CD8-positive, alpha-beta T cell (primary cell): ENCODE measurements at regions of chr15 and their contacts with region 1.

Region 1: GRCh38 chr15:80970018-80970658 is 19.5 kb downstream of the MESD start:
- DNase-seq: peak; percentile 22 to 75 (median 61)
- ATAC-seq: peak; percentile 69
- H3K4me3 ChIP-seq: no peak overlapping the region
- H3K4me3 Mint-ChIP-seq: no peak overlapping the region
- H3K27ac ChIP-seq: no peak overlapping the region
- H3K27ac Mint-ChIP-seq: no peak overlapping the region
- H3K4me1 ChIP-seq: no peaks in the 10 kb centered on the region
- H3K4me1 Mint-ChIP-seq: peaks cover 8% of the 10 kb centered on the region
- H3K27me3 ChIP-seq: no peaks in the 10 kb centered on the region
- H3K27me3 Mint-ChIP-seq: no peaks in the 10 kb centered on the region
- CTCF ChIP-seq: peak; percentile 92

Region 2: DNA sequence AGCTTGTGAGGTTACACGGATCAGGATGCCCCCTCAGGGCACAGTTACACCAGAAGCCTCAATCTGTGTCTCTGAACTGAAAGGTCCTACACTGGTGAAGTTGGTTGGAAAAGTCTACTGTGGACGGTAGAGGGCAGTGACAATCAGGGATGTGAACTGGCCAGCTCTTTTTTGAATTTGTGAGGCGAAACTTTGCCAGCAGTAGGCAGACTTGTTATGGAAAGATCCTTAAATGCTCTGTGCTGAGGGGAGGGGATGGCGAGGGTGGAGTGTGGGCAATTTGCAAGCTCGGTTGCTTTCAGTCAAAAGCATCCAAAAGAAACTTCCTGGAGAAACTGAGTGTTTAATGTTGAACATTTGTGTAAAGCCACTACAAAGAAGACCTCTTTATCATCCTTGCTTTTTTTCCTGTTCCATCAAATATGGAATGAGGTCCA is 402.4 kb before region 1 on chr15:
- CTCF ChIA-PET with region 1: interaction called, 7 read pairs
- POLR2A ChIA-PET with region 1: no interaction called
- intact Hi-C with region 1: loop called (anchors 5 kb)
- DNase-seq: peak in 3 of 9 experiments; percentile 16 to 50 (median 35)
- ATAC-seq: no peak
- H3K4me3 ChIP-seq: no peak overlapping the region
- H3K4me3 Mint-ChIP-seq: no peak overlapping the region
- H3K27ac ChIP-seq: no peak overlapping the region
- H3K27ac Mint-ChIP-seq: no peak overlapping the region
- H3K4me1 ChIP-seq: no peaks in the 10 kb centered on the region
- H3K4me1 Mint-ChIP-seq: no peaks in the 10 kb centered on the region
- H3K27me3 ChIP-seq: no peaks in the 10 kb centered on the region
- H3K27me3 Mint-ChIP-seq: peaks cover 12% of the 10 kb centered on the region
- CTCF ChIP-seq: peak; percentile 14

Region 3: DNA sequence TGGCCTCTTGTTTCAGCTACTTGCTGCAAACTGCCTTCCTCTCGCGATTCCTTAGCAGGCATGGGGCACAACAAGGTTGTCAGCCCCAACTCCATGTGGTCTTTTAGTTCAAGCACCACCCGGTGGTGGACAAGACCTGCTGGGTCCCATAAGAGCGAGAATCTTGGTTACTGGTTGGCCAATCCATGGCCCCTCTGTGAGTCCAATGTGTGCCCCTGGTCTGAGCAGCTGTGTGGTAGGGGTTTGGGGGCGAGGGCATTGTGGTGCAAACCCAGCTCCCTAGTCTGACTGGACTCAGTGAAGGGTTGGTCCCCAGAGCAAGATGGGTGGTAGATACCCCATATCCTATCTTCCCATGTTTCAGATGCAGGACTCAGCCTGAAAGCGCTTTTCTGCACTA is 29.3 kb before region 1 on chr15:
- CTCF ChIA-PET with region 1: interaction called, 10 read pairs
- POLR2A ChIA-PET with region 1: no interaction called
- intact Hi-C with region 1: no loop called
- DNase-seq: no peak
- ATAC-seq: no peak
- H3K4me3 ChIP-seq: no peak overlapping the region
- H3K4me3 Mint-ChIP-seq: no peak overlapping the region
- H3K27ac ChIP-seq: no peak overlapping the region
- H3K27ac Mint-ChIP-seq: no peak overlapping the region
- H3K4me1 ChIP-seq: no peaks in the 10 kb centered on the region
- H3K4me1 Mint-ChIP-seq: no peaks in the 10 kb centered on the region
- H3K27me3 ChIP-seq: no peaks in the 10 kb centered on the region
- H3K27me3 Mint-ChIP-seq: no peaks in the 10 kb centered on the region
- CTCF ChIP-seq: no peak

Region 4: DNA sequence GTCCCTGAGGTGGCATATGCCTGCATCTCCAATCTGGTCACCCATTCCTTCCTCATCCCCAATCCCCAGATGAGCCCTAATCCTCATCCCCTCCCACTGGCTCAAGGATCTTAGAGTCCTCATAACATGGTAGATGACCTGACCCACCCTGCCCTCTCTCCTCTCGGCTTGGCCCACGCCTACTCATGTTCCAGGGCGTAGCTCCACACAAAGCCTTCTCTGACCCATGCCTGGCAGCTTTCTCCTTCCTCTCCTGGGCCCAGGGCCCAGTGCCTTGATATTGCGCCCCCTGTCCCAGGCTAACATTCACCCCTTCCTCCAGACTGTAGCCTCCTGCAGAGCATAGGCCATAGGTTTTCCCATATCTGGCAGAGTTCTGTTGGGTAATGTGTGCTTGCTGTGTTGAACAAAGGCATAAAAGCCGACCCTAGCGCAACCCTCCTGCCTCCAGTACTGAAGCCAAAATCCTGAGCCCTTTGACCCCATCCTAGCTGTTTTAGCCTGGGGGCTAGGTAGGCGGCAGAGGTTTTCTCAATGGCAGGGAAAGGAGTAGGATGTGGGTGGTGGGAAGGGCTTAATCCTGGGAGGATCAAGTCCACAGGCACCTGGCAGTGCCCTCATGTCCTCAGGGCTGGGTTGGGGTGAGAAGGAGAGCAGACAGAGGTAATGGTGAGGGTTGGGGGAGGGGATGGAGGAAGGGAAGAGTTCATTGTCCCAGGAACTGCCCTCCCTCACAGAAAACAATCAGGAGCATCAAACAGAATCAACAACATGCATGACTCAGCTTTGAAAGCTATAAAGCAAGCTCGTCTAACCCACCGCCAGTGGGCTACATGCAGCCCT is 16.0 kb before region 1 on chr15:
- CTCF ChIA-PET with region 1: interaction called, 16 read pairs
- POLR2A ChIA-PET with region 1: no interaction called
- intact Hi-C with region 1: no loop called
- DNase-seq: peak in 1 of 9 experiments; percentile 32
- ATAC-seq: no peak
- H3K4me3 ChIP-seq: no peak overlapping the region
- H3K4me3 Mint-ChIP-seq: no peak overlapping the region
- H3K27ac ChIP-seq: no peak overlapping the region
- H3K27ac Mint-ChIP-seq: no peak overlapping the region
- H3K4me1 ChIP-seq: no peaks in the 10 kb centered on the region
- H3K4me1 Mint-ChIP-seq: peaks cover 2% of the 10 kb centered on the region
- H3K27me3 ChIP-seq: no peaks in the 10 kb centered on the region
- H3K27me3 Mint-ChIP-seq: no peaks in the 10 kb centered on the region
- CTCF ChIP-seq: no peak

Region 5: GRCh38 chr15:81239190-81239589 is 269.1 kb after region 1 on chr15:
- CTCF ChIA-PET with region 1: no interaction called
- POLR2A ChIA-PET with region 1: no interaction called
- intact Hi-C with region 1: no loop called
- DNase-seq: no peak
- ATAC-seq: no peak
- H3K4me3 ChIP-seq: no peak overlapping the region
- H3K4me3 Mint-ChIP-seq: no peak overlapping the region
- H3K27ac ChIP-seq: no peak overlapping the region
- H3K27ac Mint-ChIP-seq: no peak overlapping the region
- H3K4me1 ChIP-seq: no peaks in the 10 kb centered on the region
- H3K4me1 Mint-ChIP-seq: no peaks in the 10 kb centered on the region
- H3K27me3 ChIP-seq: no peaks in the 10 kb centered on the region
- H3K27me3 Mint-ChIP-seq: no peaks in the 10 kb centered on the region
- CTCF ChIP-seq: no peak